ENCODE measurements at regions of chr18 and their contacts with region 1.

Region 1: GRCh38 chr18:21955757-21956652 is 213.4 kb upstream of the GATA6 start:
- DNase-seq: peak; percentile 37 to 83 (median 69)
- ATAC-seq: peak; percentile 71 to 89 (median 83)
- H3K4me3 ChIP-seq: no peak overlapping the region
- H3K4me3 Mint-ChIP-seq: no peak overlapping the region
- H3K27ac ChIP-seq: no peak overlapping the region
- H3K27ac Mint-ChIP-seq: no peak overlapping the region
- H3K4me1 ChIP-seq: no peaks in the 10 kb centered on the region
- H3K4me1 Mint-ChIP-seq: no peaks in the 10 kb centered on the region
- H3K27me3 ChIP-seq: no peaks in the 10 kb centered on the region
- H3K27me3 Mint-ChIP-seq: peaks cover 20 to 38% of the 10 kb centered on the region in 2 donors

Region 2: GRCh38 chr18:21194871-21195771 is 760.9 kb before region 1 on chr18:
- CTCF ChIA-PET with region 1: interaction called, 15 to 16 read pairs
- POLR2A ChIA-PET with region 1: no interaction called
- DNase-seq: peak in 1 of 35 experiments; percentile 53
- ATAC-seq: no peak
- H3K4me3 ChIP-seq: no peak overlapping the region
- H3K4me3 Mint-ChIP-seq: no peak overlapping the region
- H3K27ac ChIP-seq: no peak overlapping the region
- H3K27ac Mint-ChIP-seq: no peak overlapping the region
- H3K4me1 ChIP-seq: no peaks in the 10 kb centered on the region
- H3K4me1 Mint-ChIP-seq: no peaks in the 10 kb centered on the region
- H3K27me3 ChIP-seq: peaks cover 0 to 9% of the 10 kb centered on the region in 2 experiments
- H3K27me3 Mint-ChIP-seq: peaks cover 18 to 21% of the 10 kb centered on the region in 2 donors